Ascending aorta (tissue), 2 donors: ENCODE measurements at regions of chr1 and their contacts with region 1.

Region 1: DNA sequence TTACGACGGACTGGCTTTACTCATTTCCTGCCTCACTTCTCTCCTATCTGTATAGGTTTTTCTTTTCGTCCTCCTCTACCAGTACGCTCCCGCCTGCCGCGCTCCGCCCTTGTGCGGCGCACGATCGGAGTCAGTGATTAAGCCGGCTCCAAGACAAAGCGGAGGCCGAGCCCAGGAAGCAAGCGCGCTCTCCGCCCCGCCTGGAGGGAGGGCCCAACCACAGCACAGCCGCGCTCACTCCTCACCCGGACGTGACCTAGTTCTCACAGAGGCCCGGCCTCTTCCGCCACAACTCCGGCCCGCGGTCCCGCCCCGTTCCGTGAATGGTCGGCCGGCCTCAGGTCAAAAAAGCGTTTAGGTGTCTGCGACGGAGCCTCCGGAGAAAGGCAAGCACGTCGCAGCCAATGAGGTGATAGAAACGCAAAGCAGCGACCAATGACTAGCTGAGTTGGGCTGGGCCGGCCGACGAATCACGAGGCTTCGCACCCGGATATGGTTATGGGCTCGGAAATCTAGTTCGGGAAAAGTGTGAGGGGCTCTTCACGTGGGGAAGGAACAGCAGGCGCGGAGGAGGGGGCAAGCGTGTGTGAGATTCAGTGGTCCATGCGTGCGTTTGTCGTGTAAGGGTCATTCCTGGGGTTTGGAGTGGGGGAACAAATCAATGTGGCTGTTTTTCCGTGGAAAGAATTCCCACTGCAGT is at the start of gene METTL13:
- DNase-seq: peak; percentile 95 to 100
- H3K4me3 ChIP-seq: peak within 1 kb of the TSS; percentile 88 to 96
- H3K27ac ChIP-seq: peak within 1 kb of the TSS; percentile 78 to 91
- H3K4me1 ChIP-seq: peaks cover 5 to 15% of the 10 kb centered on the region in 2 donors
- H3K27me3 ChIP-seq: no peaks in the 10 kb centered on the region
- CTCF ChIP-seq: no peak
- total RNA-seq, gene METTL13: 6.9 TPM

Region 2: GRCh38 chr1:171468120-171469035 is 312.9 kb before region 1 on chr1:
- intact Hi-C with region 1: no loop called
- DNase-seq: no peak
- H3K4me3 ChIP-seq: no peak overlapping the region
- H3K27ac ChIP-seq: peak overlapping the region; percentile 81 to 83
- H3K4me1 ChIP-seq: peaks cover 0 to 3% of the 10 kb centered on the region in 2 donors
- H3K27me3 ChIP-seq: no peaks in the 10 kb centered on the region
- CTCF ChIP-seq: no peak

Region 3: DNA sequence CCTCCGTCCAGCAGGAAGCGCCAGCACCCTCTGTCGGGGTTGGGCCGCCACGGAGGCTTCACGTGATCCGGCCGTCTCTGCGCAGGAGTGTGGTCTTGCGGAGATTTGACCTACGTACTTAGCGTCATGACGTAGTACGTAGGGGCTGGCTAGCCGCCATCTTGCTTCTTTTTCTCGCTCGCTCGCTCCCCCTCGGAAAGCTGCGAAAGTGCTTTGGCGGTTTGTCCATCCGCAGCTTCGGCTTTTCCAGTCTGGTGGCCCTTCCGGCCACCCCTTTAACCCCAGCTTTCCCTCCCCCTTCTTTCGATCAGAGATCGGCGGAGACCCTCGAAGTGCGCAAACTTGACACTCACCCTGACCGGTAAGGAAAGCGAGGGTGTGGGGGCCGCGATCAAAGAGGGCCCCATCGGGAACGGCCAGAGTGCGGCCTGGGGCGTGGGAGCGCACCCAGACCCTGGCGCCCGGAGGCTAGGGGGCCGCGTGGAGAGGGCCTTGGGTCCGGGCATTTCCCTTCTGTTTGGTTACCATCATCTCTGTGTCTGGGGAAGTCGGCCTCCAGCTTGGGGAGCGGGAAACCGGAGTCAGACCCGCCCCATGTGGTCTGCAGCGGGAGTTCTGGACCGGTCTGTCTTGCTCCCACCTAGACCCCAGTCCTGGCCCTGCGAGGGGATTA is 295.8 kb before region 1 on chr1 and contains the start of gene PRRC2C:
- intact Hi-C with region 1: loop called (anchors 5 kb)
- DNase-seq: peak; percentile 88 to 99
- H3K4me3 ChIP-seq: peak within 1 kb of the TSS; percentile 75 to 91
- H3K27ac ChIP-seq: peak within 1 kb of the TSS; percentile 97 to 100
- H3K4me1 ChIP-seq: peaks cover 3 to 19% of the 10 kb centered on the region in 2 donors
- H3K27me3 ChIP-seq: no peaks in the 10 kb centered on the region
- CTCF ChIP-seq: peak in 2 of 3 experiments; percentile 83 to 89
- total RNA-seq, gene PRRC2C: 46.3 TPM

Region 4: GRCh38 chr1:171644805-171645483 is 136.4 kb before region 1 on chr1:
- intact Hi-C with region 1: loop called (anchors 1 kb)
- DNase-seq: peak; percentile 39 to 92
- H3K4me3 ChIP-seq: peak overlapping the region in 1 of 2 donors; percentile 37
- H3K27ac ChIP-seq: peak overlapping the region; percentile 81 to 86
- H3K4me1 ChIP-seq: peaks cover 6 to 14% of the 10 kb centered on the region in 2 donors
- H3K27me3 ChIP-seq: no peaks in the 10 kb centered on the region
- CTCF ChIP-seq: peak; percentile 80 to 95 (median 87)

Region 5: DNA sequence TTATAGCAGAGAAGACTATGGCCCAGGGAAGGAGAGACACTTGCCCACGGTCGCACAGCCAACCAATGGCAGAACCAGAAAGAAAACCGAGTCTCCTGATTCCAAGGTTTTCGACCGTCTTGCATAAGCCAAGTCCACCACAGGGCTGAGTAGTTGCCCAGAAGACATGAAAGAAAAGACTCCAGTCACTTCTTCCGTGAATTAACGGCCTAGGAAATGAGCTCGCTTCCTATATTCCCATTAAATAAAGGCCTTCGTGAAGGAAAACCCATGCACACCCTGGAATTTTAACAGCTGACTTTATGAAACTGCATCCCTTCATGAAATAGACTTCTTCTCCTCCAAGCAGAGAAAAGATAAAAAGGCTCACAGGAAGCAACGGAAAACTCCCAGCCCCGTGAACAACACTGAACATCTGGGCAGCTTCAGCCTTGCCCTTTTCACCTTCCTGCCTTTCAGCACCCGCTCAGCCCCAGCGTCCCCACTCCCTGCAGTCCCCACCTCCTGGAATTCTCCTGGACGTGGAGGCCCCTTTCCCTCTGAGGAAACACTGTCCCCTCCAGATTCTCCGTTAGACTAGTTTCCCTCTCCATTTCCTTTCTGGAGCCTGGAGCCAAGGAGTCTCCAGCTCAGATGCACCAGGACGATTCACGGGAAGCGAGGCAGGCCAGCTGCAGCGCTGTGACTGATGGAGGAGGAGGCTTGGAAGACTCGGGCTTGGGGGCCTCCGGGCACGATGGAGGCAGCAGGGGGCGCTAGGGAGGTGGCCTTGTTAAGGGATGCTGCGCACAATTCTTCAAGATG is 126.2 kb before region 1 on chr1:
- intact Hi-C with region 1: loop called (anchors 2 kb)
- DNase-seq: peak in 1 of 2 donors; percentile 78
- H3K4me3 ChIP-seq: peak overlapping the region in 1 of 2 donors; percentile 32
- H3K27ac ChIP-seq: peak overlapping the region; percentile 87 to 96
- H3K4me1 ChIP-seq: peaks cover 8 to 36% of the 10 kb centered on the region in 2 donors
- H3K27me3 ChIP-seq: no peaks in the 10 kb centered on the region
- CTCF ChIP-seq: peak in 2 of 3 experiments; percentile 45 to 47

Region 6: GRCh38 chr1:171674431-171675405 is 106.6 kb before region 1 on chr1:
- intact Hi-C with region 1: no loop called
- DNase-seq: no peak
- H3K4me3 ChIP-seq: no peak overlapping the region
- H3K27ac ChIP-seq: peak overlapping the region; percentile 72 to 86
- H3K4me1 ChIP-seq: peaks cover 4 to 7% of the 10 kb centered on the region in 2 donors
- H3K27me3 ChIP-seq: no peaks in the 10 kb centered on the region
- CTCF ChIP-seq: no peak

Region 7: DNA sequence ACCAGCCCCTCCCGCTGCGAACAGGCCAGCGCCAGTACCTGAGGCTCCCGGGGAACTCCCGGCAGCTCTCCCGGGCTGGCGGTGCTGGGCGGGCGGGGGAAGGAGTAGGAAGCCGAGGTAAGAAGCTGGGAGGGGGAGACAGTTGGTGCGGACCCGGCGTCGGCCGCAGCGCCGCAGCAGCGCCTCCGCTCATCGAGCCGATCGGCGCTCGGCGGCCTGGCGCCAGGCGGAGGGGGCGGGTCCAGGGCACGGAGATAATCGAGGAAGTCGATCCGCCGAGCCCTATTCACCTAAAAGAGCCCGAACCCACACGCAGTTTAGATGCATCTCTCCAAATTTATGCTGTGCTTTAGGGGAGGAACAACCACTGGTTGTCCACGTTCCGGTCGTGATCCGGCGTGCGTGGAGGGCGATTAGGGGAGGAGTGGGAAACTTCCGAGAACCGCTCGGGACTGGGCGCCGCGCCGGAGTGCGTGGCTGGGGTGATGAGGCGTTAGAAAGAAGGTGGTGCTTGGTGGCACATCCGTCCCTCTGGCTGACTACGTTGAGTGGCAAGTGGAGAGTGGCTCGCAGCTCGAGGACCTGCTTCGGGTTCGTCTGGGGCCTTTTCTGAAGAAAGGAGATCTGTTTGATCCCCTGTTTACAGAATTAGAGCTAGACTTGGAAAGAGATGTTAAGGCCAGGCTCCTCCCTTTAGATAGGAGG is 39.3 kb before region 1 on chr1 and contains the start of gene VAMP4:
- intact Hi-C with region 1: loop called (anchors 1 kb)
- DNase-seq: peak; percentile 51 to 94
- H3K4me3 ChIP-seq: peak within 1 kb of the TSS; percentile 90 to 96
- H3K27ac ChIP-seq: peak within 1 kb of the TSS; percentile 95 to 97
- H3K4me1 ChIP-seq: peaks cover 9 to 41% of the 10 kb centered on the region in 2 donors
- H3K27me3 ChIP-seq: no peaks in the 10 kb centered on the region
- CTCF ChIP-seq: no peak
- total RNA-seq, gene VAMP4: 3.6 TPM

Region 8: DNA sequence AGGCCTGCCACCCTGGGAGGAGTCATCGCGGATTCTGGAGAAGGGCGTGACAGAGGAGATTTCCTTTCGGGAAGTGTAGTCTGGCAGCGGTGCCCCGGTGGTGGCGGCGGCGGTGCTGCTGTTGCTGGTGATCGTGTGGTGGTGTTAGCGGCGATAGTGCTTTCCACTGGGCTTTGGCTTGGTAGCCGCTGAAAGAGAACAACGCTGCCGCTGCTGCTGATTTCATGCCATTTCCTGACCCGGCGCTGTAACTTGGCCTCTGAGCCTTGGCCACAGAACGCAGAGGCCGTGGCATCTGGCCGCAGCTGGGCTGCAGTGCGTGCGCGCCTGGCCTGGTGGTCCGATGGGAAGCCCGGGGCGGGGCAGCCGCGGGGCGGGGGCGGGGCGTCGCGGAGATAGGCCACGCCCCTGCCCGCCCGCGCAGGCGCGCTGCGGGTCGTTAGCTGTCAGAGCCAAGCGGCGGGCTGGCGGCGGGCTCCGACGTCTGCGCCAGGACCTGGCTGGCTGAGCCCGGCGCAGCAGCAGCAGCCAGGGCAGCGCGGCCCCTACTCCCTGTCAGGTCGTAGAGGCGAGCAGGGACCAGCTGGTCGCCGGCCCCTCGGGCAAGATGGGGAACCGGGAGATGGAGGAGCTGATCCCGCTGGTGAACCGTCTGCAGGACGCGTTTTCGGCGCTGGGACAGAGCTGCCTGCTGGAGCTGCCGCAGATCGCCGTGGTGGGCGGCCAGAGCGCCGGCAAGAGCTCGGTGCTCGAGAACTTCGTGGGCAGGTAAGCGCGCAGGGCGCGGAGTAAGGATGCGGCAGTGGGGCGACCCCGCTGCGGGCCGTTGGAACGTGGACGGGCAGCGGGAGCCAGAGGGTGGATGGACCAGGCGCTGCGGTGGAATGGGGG is 60.0 kb after region 1 on chr1 and contains the start of gene DNM3:
- intact Hi-C with region 1: loop called (anchors 1 kb)
- DNase-seq: peak; percentile 46 to 93
- H3K4me3 ChIP-seq: peak within 1 kb of the TSS; percentile 71 to 77
- H3K27ac ChIP-seq: peak within 1 kb of the TSS; percentile 66 to 73
- H3K4me1 ChIP-seq: no peaks in the 10 kb centered on the region
- H3K27me3 ChIP-seq: no peaks in the 10 kb centered on the region
- CTCF ChIP-seq: no peak
- total RNA-seq, gene DNM3: 9.6 TPM

Region 9: DNA sequence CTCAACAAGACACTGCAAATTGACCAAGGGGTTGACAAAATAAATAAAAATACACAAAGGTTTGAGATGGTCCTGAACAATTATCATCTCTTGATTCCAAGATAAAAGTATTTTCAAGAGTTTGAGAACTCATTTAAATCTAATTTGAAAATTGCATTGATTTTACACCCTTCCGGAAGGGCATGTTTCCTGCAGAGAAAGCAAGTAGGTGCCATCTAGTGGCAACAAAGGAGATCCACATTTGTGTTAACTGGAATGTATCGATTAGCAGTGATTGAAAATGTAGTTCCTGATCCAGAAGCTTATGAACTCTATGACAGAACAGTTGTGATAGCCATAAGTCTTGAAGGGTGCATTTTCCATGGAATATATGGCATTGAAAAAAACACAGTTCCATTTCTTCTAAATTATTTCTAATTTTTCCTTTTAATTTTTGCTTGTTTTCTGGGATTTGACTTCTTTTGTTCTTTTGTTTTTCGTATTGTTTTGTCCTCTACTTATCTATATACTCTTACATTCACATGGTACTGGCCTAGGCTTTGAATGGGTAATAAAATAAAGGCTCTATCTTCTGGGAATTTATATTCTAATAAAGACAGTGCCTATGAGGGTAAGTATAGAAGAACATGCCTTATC is 203.6 kb after region 1 on chr1:
- intact Hi-C with region 1: no loop called
- DNase-seq: no peak
- H3K4me3 ChIP-seq: no peak overlapping the region
- H3K27ac ChIP-seq: no peak overlapping the region
- H3K4me1 ChIP-seq: no peaks in the 10 kb centered on the region
- H3K27me3 ChIP-seq: no peaks in the 10 kb centered on the region
- CTCF ChIP-seq: peak; percentile 48 to 76 (median 67)

Region 10: DNA sequence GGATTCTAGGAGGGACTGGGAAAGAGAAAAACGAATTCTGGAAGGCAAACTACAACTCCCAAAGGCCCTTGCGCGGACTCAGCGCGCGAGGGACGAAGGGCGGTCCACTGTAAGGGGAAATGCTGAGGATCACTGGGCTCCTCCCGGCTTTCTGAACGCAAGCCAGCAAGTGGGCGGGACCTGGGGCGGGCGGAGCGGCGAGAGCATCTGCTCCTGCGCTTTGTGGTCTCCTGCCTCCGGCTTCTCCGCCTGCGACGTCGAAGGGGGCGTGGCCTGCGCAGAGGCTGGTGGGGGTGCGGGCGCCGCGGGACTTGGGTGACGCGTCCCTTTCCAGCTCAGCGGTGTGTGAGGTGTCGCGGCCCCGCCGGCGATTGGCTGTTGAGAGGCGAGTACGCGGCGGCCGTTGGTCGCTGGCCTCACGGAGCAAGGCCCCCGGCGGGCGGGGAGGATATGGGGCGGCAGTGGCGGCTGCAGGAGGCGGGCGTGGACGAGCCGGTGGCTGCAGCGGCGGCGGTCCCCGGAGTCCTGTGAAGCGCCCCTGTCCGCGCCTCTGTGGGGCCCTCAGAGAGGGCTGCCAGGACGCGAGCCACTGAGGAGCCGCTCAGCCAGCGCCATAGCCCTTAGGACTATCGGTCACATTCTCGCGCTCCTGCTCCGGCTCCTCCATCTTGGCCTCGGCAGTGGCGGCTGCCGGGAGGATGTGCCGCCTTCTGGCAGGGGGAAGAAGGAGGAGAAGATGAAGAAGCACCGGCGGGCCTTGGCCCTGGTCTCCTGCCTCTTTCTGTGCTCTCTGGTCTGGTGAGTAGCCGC is 751.6 kb after region 1 on chr1 and contains the start of gene SUCO:
- intact Hi-C with region 1: loop called (anchors 5 kb)
- DNase-seq: peak; percentile 100
- H3K4me3 ChIP-seq: peak within 1 kb of the TSS; percentile 80 to 83
- H3K27ac ChIP-seq: peak within 1 kb of the TSS; percentile 95 to 98
- H3K4me1 ChIP-seq: peaks cover 4 to 10% of the 10 kb centered on the region in 2 donors
- H3K27me3 ChIP-seq: no peaks in the 10 kb centered on the region
- CTCF ChIP-seq: peak in 1 of 3 experiments; percentile 5
- total RNA-seq, gene SUCO: 7.8 TPM